ENCODE measurements at regions of chr17 and their contacts with region 1.

Region 1: DNA sequence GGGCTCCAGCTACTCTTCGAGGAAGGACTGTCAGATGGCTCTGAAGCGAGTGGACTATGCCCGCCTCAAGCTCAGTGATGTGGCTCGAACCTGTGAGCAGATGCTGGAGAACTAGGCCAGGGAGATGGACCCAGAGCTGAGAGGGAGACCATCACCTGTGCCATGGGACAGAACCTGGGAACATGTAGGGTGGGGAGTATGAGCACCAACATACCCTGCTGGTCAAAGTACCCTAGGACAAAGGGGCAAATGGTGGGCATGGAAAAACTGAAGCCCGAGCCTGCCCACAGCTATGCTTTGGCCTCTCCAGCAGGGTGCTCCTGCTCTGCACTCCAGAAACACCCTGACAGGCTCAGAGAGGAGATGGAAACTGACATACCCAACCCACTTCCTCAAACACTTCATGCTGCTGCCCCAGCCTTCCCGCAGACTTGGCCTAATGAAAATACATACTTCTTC is 1.9 kb downstream of the MED11 start:
- DNase-seq: no peak
- H3K4me3 ChIP-seq: no peak overlapping the region
- H3K4me1 ChIP-seq: peaks cover 7% of the 10 kb centered on the region
- H3K27me3 ChIP-seq: no peaks in the 10 kb centered on the region

Region 2: DNA sequence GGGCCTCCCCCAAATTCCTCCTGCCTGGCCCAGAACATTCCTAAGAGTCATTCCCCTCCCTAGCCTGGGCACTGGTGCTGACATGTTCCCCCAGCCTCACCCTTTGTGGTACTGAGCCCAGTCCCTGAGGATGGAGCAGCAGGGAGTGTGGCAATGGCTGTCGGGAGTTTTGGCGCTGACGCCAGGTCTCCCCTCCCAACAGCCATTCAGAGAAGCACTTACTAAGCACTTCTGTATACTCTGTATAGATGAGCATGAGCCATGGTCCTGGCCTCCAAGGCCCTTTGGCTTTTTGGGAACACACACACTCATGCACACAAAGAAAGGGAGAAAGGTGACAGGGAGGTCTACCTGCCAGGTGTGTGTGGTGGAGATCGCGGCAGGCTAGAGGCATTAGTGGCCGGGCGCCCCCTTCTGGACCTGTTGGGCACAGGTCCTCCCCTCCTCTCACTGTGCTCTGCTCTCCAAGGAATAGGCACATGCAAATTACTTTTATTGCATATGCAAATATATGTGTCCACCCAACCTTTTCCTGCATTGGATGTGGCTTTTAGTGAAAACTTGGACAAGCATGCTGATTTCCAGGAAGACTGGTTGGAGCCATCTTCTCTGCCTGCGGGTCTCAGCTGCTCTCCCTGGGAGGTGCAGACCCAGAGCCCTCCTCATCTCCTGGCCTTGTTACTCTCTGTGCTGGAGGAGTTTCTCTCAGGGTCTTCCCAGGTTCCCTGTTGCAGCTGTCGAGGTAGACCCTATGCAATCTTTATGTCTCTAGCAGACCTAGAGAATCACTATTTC is 148.9 kb after region 1 on chr17:
- in situ Hi-C with region 1: loop called (anchors 5 kb)
- DNase-seq: peak; percentile 52 to 81
- H3K4me3 ChIP-seq: no peak overlapping the region
- H3K4me1 ChIP-seq: no peaks in the 10 kb centered on the region
- H3K27me3 ChIP-seq: no peaks in the 10 kb centered on the region